Gastrocnemius medialis (tissue), 4 donors: ENCODE measurements at regions of chr2 and their contacts with region 1.

Region 1: GRCh38 chr2:219177552-219178376 is at the start of gene RETREG2:
- DNase-seq: peak; percentile 86 to 89
- ATAC-seq: peak; percentile 85 to 90
- H3K4me3 ChIP-seq: peak within 1 kb of the TSS; percentile 87 to 96 (median 95)
- H3K27ac ChIP-seq: peak within 1 kb of the TSS; percentile 94 to 99 (median 99)
- H3K4me1 ChIP-seq: peaks cover 17 to 21% of the 10 kb centered on the region in 2 donors
- H3K27me3 ChIP-seq: no peaks in the 10 kb centered on the region
- CTCF ChIP-seq: peak; percentile 25 to 72 (median 66)
- POLR2A ChIP-seq: peak; percentile 96 to 99
- total RNA-seq, gene RETREG2: 39.8 to 57.2 (median 44.9) TPM

Region 2: DNA sequence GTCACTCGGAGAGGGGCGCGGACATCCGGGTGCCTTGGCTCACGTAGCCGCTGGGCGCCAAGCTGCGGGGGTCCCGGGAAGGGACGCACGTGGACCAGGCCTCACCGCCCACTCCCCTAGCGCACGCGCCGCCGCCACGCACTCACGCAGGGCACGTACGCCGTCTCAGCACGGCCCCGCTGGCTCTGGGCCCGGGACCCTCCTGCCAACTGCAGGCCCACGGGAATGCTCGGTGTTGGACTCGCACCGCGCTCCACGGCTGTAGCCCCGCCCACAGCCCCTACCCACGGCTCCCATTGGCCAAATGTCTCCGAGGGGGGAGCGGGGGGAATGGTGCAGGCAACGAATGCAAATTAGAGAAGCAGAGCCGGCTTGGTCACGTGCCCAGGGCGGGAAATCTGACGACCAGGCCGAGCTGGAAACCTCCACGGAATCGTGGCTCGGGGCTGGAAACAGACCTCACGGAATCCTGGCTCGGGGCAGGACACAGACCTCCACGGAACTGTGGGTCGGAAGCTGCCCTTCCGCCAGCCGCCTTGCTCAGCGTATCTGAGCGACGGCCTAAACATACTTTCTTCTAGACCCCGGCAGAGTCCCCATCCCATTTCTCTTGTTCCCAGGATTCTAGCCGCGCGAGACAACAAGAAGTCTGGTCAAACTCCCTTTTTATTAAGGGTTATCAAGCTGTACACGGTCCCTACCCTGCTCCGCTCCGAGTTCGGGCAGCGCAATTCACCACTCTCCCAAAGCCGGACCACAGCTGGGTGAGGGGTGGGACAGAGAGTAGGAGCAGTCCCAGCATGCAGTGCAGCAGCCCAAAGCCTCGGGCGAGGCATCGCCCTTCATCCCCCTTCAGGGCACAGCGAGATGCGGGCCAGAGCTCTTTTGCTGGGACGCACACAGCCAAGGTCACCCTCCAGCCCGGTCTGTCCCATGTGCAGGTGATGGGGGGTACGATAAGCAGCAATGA is 41.3 kb after region 1 on chr2 and contains the start of gene ABCB6:
- in situ Hi-C with region 1: no loop called
- intact Hi-C with region 1: loop called (anchors 1 kb)
- DNase-seq: peak; percentile 96 to 98
- ATAC-seq: peak; percentile 82 to 84
- H3K4me3 ChIP-seq: peak within 1 kb of the TSS; percentile 55 to 74 (median 64)
- H3K27ac ChIP-seq: peak within 1 kb of the TSS; percentile 87 to 99 (median 94)
- H3K4me1 ChIP-seq: peaks cover 19 to 29% of the 10 kb centered on the region in 2 donors
- H3K27me3 ChIP-seq: no peaks in the 10 kb centered on the region
- CTCF ChIP-seq: no peak
- POLR2A ChIP-seq: peak; percentile 54 to 78
- total RNA-seq, gene ABCB6: 15.0 to 45.8 (median 31.8) TPM

Region 3: DNA sequence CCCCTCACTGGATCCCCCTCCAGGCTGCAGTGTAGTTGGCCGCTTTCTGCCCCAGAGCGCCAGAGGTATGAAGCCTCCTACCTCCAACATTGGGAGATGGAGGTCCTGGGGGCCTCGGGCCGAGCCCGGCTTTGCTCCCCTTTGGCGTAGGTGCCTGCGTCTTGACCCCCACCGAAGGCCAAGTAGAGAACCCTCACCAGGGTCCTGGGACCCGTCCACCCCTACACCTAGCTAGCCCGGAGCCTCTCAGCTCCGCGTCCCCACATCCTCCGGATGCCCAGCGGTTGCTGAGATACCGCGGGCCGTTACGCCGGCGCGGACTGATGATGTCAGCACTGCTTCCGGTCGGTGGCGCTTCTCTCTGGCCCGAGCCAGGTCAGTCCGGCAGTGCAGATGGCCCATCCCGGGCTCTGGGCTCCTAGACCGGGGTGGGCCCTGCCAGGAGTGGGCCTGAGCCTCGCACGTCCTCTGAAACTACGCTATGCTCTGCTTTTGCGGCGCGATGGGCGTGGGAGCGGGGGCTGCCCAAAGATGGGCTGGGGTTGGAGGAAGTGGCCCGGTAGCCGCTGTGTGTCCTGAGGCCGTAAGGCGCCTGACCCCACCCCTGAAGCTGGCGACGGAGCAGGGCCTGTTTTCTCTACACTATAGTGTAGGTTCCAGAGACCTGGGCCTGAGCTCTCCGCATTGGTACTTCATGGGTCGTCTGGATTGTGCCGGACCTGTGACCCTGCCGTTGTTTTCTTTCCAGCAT is 67.6 kb after region 1 on chr2 and contains the starts of genes GLB1L and STK16:
- in situ Hi-C with region 1: no loop called
- intact Hi-C with region 1: loop called (anchors 2 kb)
- DNase-seq: peak; percentile 85 to 91
- ATAC-seq: peak; percentile 89 to 90
- H3K4me3 ChIP-seq: peak within 1 kb of the TSS; percentile 65 to 98 (median 82)
- H3K27ac ChIP-seq: peak within 1 kb of the TSS; percentile 83 to 99 (median 96)
- H3K4me1 ChIP-seq: peaks cover 43 to 47% of the 10 kb centered on the region in 2 donors
- H3K27me3 ChIP-seq: no peaks in the 10 kb centered on the region
- CTCF ChIP-seq: no peak
- POLR2A ChIP-seq: peak; percentile 76 to 89
- total RNA-seq, gene GLB1L: 1.0 to 3.6 (median 1.3) TPM
- total RNA-seq, gene STK16: 4.4 to 19.3 (median 14.2) TPM

Region 4: DNA sequence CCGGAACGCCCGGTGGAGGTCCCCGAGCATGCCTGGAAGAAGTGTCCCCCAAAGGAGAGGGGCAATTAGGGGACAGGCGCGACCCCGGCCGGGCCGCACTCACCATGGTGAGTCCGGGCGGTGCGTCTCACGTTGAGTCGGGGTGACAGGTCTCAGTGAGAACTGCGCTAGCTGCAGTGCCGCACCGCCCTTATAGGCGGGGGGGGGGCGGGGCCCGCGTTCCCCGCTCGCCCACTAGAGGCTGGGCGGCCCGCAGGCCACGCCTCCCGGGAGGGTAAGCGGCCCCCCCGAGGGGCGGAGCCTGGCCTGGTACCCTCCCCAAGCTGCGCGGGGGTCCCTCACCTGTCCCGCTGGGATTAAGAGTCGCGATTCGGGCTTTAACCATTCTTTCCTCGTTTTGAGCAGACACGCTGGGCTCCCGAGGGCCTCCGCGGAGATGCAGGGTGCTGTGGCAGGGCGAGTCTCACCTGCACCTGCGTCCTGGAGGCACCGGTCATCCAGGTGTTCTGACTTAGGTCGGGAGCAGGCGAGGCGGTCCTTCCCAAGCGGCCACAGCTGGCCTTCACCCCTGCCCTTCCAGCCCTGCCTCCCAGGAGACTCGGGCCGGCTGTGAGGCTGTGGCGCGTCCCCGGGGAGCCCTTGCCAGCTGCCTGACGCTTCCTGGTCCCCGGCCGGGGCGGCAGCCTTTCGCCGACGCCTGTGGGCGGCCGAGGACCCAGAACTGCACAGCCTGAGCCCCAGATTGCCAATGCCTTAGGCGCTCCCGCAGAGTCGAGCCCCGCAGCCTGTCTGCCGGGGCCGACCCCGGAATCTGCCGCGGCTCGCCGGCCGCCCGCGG is 76.2 kb after region 1 on chr2 and contains the start of gene TUBA4A:
- in situ Hi-C with region 1: no loop called
- intact Hi-C with region 1: loop called (anchors 2 kb)
- DNase-seq: peak; percentile 76 to 88
- ATAC-seq: peak; percentile 69 to 72
- H3K4me3 ChIP-seq: peak within 1 kb of the TSS; percentile 68 to 88 (median 76)
- H3K27ac ChIP-seq: peak within 1 kb of the TSS; percentile 91 to 99 (median 96)
- H3K4me1 ChIP-seq: peaks cover 36 to 53% of the 10 kb centered on the region in 2 donors
- H3K27me3 ChIP-seq: no peaks in the 10 kb centered on the region
- CTCF ChIP-seq: peak in 3 of 5 experiments; percentile 23 to 34 (median 30)
- POLR2A ChIP-seq: peak; percentile 98
- total RNA-seq, gene TUBA4A: 351 to 797 (median 386) TPM